ENCODE measurements at regions of chr18 and their contacts with region 1.

Region 1: GRCh38 chr18:76709659-76710645 is 112.4 kb upstream of the ZNF236 start:
- DNase-seq: peak; percentile 56 to 77 (median 72)
- H3K4me3 ChIP-seq: peak overlapping the region in 1 of 7 experiments; percentile 29
- H3K27ac ChIP-seq: no peak overlapping the region
- H3K4me1 ChIP-seq: peaks cover 0 to 13% (median 10%) of the 10 kb centered on the region in 4 experiments
- H3K27me3 ChIP-seq: no peaks in the 10 kb centered on the region

Region 2: DNA sequence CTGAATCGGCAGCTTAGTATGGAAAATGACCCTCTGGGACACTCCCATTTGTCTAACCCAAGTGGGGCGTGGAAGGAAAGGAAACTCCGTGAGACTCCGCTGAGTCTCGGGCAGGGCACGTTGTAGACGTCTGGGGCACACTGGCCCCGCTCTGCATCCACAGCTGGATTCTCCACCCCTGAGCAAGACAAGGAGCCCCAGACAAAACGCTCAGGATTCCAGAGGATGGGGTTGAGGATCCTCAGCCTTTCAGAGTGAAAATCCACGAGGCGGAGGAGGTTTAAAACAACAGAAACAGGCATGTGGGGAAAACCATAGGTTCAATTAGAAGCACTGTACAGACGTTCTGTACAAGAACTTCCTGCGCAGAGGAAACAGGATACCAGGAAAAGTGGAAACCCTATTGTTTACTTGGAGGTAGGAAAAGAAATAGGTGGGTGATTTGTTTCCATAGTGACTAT is 12.5 kb before region 1 on chr18:
- CTCF ChIA-PET with region 1: interaction called, 23 read pairs
- POLR2A ChIA-PET with region 1: no interaction called
- DNase-seq: no peak
- H3K4me3 ChIP-seq: peak overlapping the region in 1 of 7 experiments; percentile 10
- H3K27ac ChIP-seq: no peak overlapping the region
- H3K4me1 ChIP-seq: peaks cover 0 to 7% (median 0%) of the 10 kb centered on the region in 4 experiments
- H3K27me3 ChIP-seq: peaks cover 0 to 48% (median 10%) of the 10 kb centered on the region in 5 experiments

Region 3: GRCh38 chr18:76721207-76721996 is 11.4 kb after region 1 on chr18:
- CTCF ChIA-PET with region 1: interaction called, 13 read pairs
- POLR2A ChIA-PET with region 1: no interaction called
- DNase-seq: peak in 2 of 3 donors; percentile 65 to 69
- H3K4me3 ChIP-seq: peak overlapping the region in 2 of 7 experiments; percentile 13 to 17
- H3K27ac ChIP-seq: no peak overlapping the region
- H3K4me1 ChIP-seq: peaks cover 6 to 17% (median 10%) of the 10 kb centered on the region in 4 experiments
- H3K27me3 ChIP-seq: peaks cover 0 to 10% (median 3%) of the 10 kb centered on the region in 5 experiments

Region 4: GRCh38 chr18:76736309-76736708 is 26.4 kb after region 1 on chr18:
- CTCF ChIA-PET with region 1: no interaction called
- POLR2A ChIA-PET with region 1: no interaction called
- DNase-seq: no peak
- H3K4me3 ChIP-seq: no peak overlapping the region
- H3K27ac ChIP-seq: no peak overlapping the region
- H3K4me1 ChIP-seq: peaks cover 0 to 12% (median 7%) of the 10 kb centered on the region in 4 experiments
- H3K27me3 ChIP-seq: peaks cover 0 to 3% (median 0%) of the 10 kb centered on the region in 5 experiments

Measured in common myeloid progenitor, CD34-positive (primary cell).